ENCODE measurements at regions of chr17 and their contacts with region 1.

Region 1: DNA sequence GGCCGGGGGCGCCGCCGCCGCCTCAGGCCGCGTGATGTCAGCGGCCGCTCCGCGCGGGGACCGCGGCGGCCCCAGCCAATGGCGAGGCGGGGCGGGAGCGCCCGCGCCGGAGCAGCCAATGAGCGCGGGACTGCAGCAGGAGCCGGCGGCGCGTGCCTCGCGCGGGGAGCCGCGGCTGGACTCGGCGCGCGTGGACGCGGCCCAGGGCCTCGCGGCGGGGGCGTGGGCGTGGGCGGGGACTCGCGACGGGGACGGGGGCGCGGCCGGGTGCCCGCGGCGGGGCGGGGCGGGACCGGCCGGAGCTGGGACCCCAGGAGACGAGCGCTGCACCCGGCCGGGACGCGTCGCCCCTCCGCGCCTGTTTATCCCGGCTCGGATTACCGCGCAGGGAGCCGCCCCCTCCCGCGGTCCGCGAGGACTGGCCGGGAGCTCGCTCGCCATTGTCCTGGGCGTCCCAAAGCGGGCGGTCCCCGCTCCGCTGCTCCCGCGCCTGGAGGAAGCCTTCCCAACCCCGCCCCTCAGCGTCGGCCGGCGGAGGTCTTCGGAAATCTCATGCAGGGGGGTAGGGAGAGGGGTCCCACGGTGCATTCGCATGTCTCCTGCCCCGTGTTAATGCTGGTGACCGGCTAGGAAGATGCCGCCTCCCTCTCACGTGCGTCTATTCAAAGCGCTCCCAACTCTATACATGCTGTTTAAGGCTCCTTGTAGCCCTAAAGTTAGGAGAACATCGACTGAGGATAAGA is at the start of gene RNF157:
- DNase-seq: peak; percentile 73
- H3K4me3 Mint-ChIP-seq: peak within 1 kb of the TSS; percentile 81
- H3K27ac Mint-ChIP-seq: peak within 1 kb of the TSS; percentile 85
- H3K4me1 Mint-ChIP-seq: peaks cover 74% of the 10 kb centered on the region
- H3K27me3 Mint-ChIP-seq: peaks cover 7% of the 10 kb centered on the region
- total RNA-seq, gene RNF157: 79.8 to 83.9 TPM

Region 2: GRCh38 chr17:76252040-76252954 is 11.7 kb after region 1 on chr17:
- CTCF ChIA-PET with region 1: interaction called, 7 read pairs
- POLR2A ChIA-PET with region 1: interaction called, 1,335 read pairs
- DNase-seq: peak; percentile 66
- H3K4me3 Mint-ChIP-seq: peak overlapping the region; percentile 72
- H3K27ac Mint-ChIP-seq: peak overlapping the region; percentile 97
- H3K4me1 Mint-ChIP-seq: peaks cover 73% of the 10 kb centered on the region
- H3K27me3 Mint-ChIP-seq: no peaks in the 10 kb centered on the region

Region 3: GRCh38 chr17:76473541-76473985 is 232.9 kb after region 1 on chr17:
- CTCF ChIA-PET with region 1: no interaction called
- POLR2A ChIA-PET with region 1: no interaction called
- DNase-seq: no peak
- H3K4me3 Mint-ChIP-seq: no peak overlapping the region
- H3K27ac Mint-ChIP-seq: no peak overlapping the region
- H3K4me1 Mint-ChIP-seq: no peaks in the 10 kb centered on the region
- H3K27me3 Mint-ChIP-seq: no peaks in the 10 kb centered on the region

Measured in activated CD4-positive, alpha-beta memory T cell treated with anti-CD3 and anti-CD28 coated beads, Interleukin-2, amount 10 ng/mL, durations not matched to agents 7 days and 5 days (primary cell).